Activated B cell treated with CpG ODN at 0.5 μM for 24 hours (primary cell): ENCODE measurements at regions of chr3 and their contacts with region 1.

Region 1: DNA sequence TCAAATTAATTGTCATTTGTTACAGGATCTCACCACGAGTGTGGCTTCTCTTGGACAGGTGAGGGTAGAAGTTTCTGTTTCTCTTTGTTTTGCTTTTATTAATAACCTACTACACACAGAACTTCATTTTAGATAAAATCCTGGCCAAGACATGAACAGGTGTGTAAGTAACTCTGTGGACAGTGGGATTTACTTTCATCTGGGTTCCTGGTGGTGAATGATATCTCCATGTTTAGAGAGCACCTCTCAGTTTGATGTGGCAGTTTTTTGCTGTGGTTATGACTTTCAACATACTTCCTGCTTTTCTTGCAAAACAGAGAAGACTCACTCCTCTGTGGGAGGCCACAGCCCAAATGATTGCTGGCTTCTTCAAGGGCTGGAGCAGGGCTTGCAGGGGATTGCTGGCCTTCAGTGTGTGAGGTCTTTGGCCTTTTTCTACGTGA is 71.1 kb upstream of the XCR1 start:
- DNase-seq: no peak
- ATAC-seq: peak; percentile 32
- H3K4me3 Mint-ChIP-seq: peak overlapping the region; percentile 63
- H3K27ac Mint-ChIP-seq: peak overlapping the region; percentile 90
- H3K4me1 Mint-ChIP-seq: peaks cover 75% of the 10 kb centered on the region
- H3K27me3 Mint-ChIP-seq: no peaks in the 10 kb centered on the region
- CTCF ChIP-seq: no peak

Region 2: GRCh38 chr3:45817831-45818522 is 280.4 kb before region 1 on chr3:
- CTCF ChIA-PET with region 1: no interaction called
- POLR2A ChIA-PET with region 1: no interaction called
- intact Hi-C with region 1: no loop called
- DNase-seq: no peak
- ATAC-seq: no peak
- H3K4me3 Mint-ChIP-seq: no peak overlapping the region
- H3K27ac Mint-ChIP-seq: no peak overlapping the region
- H3K4me1 Mint-ChIP-seq: peaks cover 23% of the 10 kb centered on the region
- H3K27me3 Mint-ChIP-seq: no peaks in the 10 kb centered on the region
- CTCF ChIP-seq: no peak

Region 3: GRCh38 chr3:45995236-45996192 is 102.8 kb before region 1 on chr3 and contains the start of gene FYCO1:
- CTCF ChIA-PET with region 1: no interaction called
- POLR2A ChIA-PET with region 1: interaction called, 6 read pairs
- intact Hi-C with region 1: loop called (anchors 1 kb)
- DNase-seq: peak; percentile 82
- ATAC-seq: peak; percentile 97
- H3K4me3 Mint-ChIP-seq: peak within 1 kb of the TSS; percentile 89
- H3K27ac Mint-ChIP-seq: peak within 1 kb of the TSS; percentile 89
- H3K4me1 Mint-ChIP-seq: peaks cover 41% of the 10 kb centered on the region
- H3K27me3 Mint-ChIP-seq: no peaks in the 10 kb centered on the region
- CTCF ChIP-seq: no peak
- total RNA-seq, gene FYCO1: 10.6 and 14.9 TPM in 2 replicates

Region 4: DNA sequence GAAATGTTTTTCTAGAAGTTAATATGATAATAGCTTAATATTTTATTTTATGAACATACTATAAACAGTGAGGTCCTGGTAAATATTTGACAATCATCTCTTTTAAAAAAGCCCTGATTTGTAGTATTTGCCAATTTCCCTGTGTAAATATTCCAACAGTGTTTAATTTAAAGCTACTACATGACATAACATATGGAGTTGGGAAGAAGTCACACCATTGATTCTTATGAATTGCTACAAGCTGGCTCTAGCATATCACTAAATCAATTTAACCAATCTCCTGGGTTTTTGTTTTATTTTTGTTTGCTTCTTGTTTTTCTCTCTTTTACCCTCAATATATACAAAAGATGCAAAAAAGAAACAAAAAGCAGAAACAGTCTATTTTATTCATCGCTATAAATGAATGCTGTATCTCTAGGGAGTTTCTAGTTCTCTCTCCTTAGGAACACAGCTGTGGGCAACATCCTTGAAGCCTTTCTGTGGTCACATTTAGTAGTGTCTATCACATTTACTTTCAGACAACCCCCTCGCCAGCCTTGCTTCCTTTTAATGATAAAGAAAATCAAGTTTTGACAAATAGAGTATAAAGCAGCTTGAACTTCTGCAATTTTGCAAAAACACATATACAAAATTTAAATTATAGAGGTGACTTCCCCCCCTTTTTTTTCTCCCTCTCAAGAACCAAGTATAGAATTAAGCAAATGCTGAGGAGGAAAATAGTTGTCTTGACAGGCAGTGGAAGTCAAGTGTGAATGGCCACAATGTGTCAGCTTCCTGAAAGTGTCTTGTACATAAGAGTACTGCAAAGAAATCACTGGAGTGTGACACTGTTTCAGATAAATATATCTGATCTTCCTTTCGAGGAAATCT is 88.4 kb after region 1 on chr3:
- CTCF ChIA-PET with region 1: interaction called, 3 read pairs
- POLR2A ChIA-PET with region 1: interaction called, 4 read pairs
- intact Hi-C with region 1: loop called (anchors 1 kb)
- DNase-seq: no peak
- ATAC-seq: peak; percentile 90
- H3K4me3 Mint-ChIP-seq: peak overlapping the region; percentile 52
- H3K27ac Mint-ChIP-seq: peak overlapping the region; percentile 68
- H3K4me1 Mint-ChIP-seq: peaks cover 58% of the 10 kb centered on the region
- H3K27me3 Mint-ChIP-seq: no peaks in the 10 kb centered on the region
- CTCF ChIP-seq: no peak

Region 5: DNA sequence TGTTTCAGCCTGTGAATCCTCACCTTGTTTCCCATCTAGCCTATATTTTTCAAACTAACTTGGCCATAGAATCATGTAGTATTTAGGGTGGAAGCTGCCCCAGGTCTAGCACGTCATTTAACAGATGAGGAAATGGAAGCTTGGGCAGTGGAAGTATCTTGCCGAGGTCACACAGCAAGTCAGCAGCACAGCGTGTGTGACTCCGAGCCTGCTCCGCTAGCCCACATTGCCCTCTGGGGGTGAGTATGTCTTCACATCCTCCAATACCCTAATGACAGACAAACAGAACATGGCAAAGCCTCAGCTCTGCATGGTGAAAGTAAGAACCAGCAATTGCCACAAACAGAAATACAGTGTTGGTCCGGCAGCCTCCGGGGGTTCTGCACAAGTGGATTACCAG is 270.2 kb after region 1 on chr3:
- CTCF ChIA-PET with region 1: interaction called, 10 read pairs
- POLR2A ChIA-PET with region 1: interaction called, 3 read pairs
- intact Hi-C with region 1: no loop called
- DNase-seq: peak; percentile 33
- ATAC-seq: peak; percentile 91
- H3K4me3 Mint-ChIP-seq: peak overlapping the region; percentile 7
- H3K27ac Mint-ChIP-seq: no peak overlapping the region
- H3K4me1 Mint-ChIP-seq: peaks cover 34% of the 10 kb centered on the region
- H3K27me3 Mint-ChIP-seq: peaks cover 2% of the 10 kb centered on the region
- CTCF ChIP-seq: no peak